Activated CD8-positive, alpha-beta T cell treated with anti-CD3 and anti-CD28 coated beads for 36 hours (primary cell): ENCODE measurements at regions of chr11 and their contacts with region 1.

Region 1: GRCh38 chr11:131694526-131695424 is 324.4 kb downstream of the NTM start:
- DNase-seq: peak; percentile 69
- ATAC-seq: peak; percentile 83
- H3K4me3 Mint-ChIP-seq: no peak overlapping the region
- H3K27ac Mint-ChIP-seq: no peak overlapping the region
- H3K4me1 Mint-ChIP-seq: no peaks in the 10 kb centered on the region
- H3K27me3 Mint-ChIP-seq: peaks cover 34% of the 10 kb centered on the region
- CTCF ChIP-seq: peak; percentile 83

Region 2: GRCh38 chr11:131572423-131572822 is 122.4 kb before region 1 on chr11:
- CTCF ChIA-PET with region 1: no interaction called
- POLR2A ChIA-PET with region 1: no interaction called
- intact Hi-C with region 1: no loop called
- DNase-seq: no peak
- ATAC-seq: no peak
- H3K4me3 Mint-ChIP-seq: no peak overlapping the region
- H3K27ac Mint-ChIP-seq: no peak overlapping the region
- H3K4me1 Mint-ChIP-seq: no peaks in the 10 kb centered on the region
- H3K27me3 Mint-ChIP-seq: peaks cover 3% of the 10 kb centered on the region
- CTCF ChIP-seq: no peak

Region 3: GRCh38 chr11:131583938-131584337 is 110.8 kb before region 1 on chr11:
- CTCF ChIA-PET with region 1: no interaction called
- POLR2A ChIA-PET with region 1: no interaction called
- intact Hi-C with region 1: no loop called
- DNase-seq: no peak
- ATAC-seq: no peak
- H3K4me3 Mint-ChIP-seq: no peak overlapping the region
- H3K27ac Mint-ChIP-seq: no peak overlapping the region
- H3K4me1 Mint-ChIP-seq: no peaks in the 10 kb centered on the region
- H3K27me3 Mint-ChIP-seq: peaks cover 3% of the 10 kb centered on the region
- CTCF ChIP-seq: no peak

Region 4: GRCh38 chr11:131684111-131685060 is 10.4 kb before region 1 on chr11:
- CTCF ChIA-PET with region 1: interaction called, 16 read pairs
- POLR2A ChIA-PET with region 1: no interaction called
- intact Hi-C with region 1: no loop called
- DNase-seq: no peak
- ATAC-seq: no peak
- H3K4me3 Mint-ChIP-seq: no peak overlapping the region
- H3K27ac Mint-ChIP-seq: no peak overlapping the region
- H3K4me1 Mint-ChIP-seq: no peaks in the 10 kb centered on the region
- H3K27me3 Mint-ChIP-seq: peaks cover 9% of the 10 kb centered on the region
- CTCF ChIP-seq: no peak